Ovary (tissue), 10 donors: ENCODE measurements at regions of chr6 and their contacts with region 1.

Region 1: GRCh38 chr6:45350186-45350710 is 22.1 kb downstream of the RUNX2 start:
- DNase-seq: no peak
- H3K4me3 ChIP-seq: no peak overlapping the region
- H3K27ac ChIP-seq: no peak overlapping the region
- H3K4me1 ChIP-seq: no peaks in the 10 kb centered on the region
- H3K27me3 ChIP-seq: no peaks in the 10 kb centered on the region
- CTCF ChIP-seq: no peak
- EP300 ChIP-seq: no peak
- POLR2A ChIP-seq: no peak

Region 2: GRCh38 chr6:44223319-44224028 is 1126.8 kb before region 1 on chr6 and contains the start of gene SLC29A1:
- intact Hi-C with region 1: no loop called
- DNase-seq: peak; percentile 70 to 79 (median 77)
- H3K4me3 ChIP-seq: peak within 1 kb of the TSS; percentile 53
- H3K27ac ChIP-seq: peak within 1 kb of the TSS; percentile 67 to 72
- H3K4me1 ChIP-seq: peaks cover 37% of the 10 kb centered on the region
- H3K27me3 ChIP-seq: no peaks in the 10 kb centered on the region
- CTCF ChIP-seq: no peak
- EP300 ChIP-seq: no peak
- POLR2A ChIP-seq: peak; percentile 9
- total RNA-seq, gene SLC29A1: 11.2 to 35.4 (median 30.2) TPM

Region 3: GRCh38 chr6:45226081-45226480 is 124.2 kb before region 1 on chr6:
- intact Hi-C with region 1: no loop called
- DNase-seq: no peak
- H3K4me3 ChIP-seq: no peak overlapping the region
- H3K27ac ChIP-seq: no peak overlapping the region
- H3K4me1 ChIP-seq: no peaks in the 10 kb centered on the region
- H3K27me3 ChIP-seq: no peaks in the 10 kb centered on the region
- CTCF ChIP-seq: no peak
- EP300 ChIP-seq: no peak
- POLR2A ChIP-seq: no peak

Region 4: DNA sequence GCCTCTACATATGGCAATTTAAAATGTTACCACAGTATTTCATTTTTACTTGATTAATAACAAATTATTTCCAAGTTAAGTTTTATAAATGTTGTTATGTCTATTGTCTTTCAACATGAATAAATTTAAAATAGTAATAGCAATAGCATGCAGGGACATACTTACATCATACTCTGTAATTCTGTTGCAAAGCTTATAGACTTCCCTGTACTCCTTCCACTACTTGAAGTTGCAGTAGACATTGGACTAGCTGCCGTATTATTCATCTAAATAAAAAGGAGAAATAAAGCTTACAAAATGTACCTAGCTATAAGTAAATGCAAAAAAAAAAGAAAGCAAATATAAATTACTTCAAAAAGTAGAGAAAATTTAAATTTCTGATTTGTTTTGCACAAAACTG is 14.8 kb after region 1 on chr6:
- intact Hi-C with region 1: loop called in 1 of 4 experiments (anchors 1 kb)
- DNase-seq: no peak
- H3K4me3 ChIP-seq: no peak overlapping the region
- H3K27ac ChIP-seq: no peak overlapping the region
- H3K4me1 ChIP-seq: no peaks in the 10 kb centered on the region
- H3K27me3 ChIP-seq: no peaks in the 10 kb centered on the region
- CTCF ChIP-seq: no peak
- EP300 ChIP-seq: no peak
- POLR2A ChIP-seq: no peak